Common myeloid progenitor, CD34-positive (primary cell): ENCODE measurements at regions of chr1 and their contacts with region 1.

Region 1: GRCh38 chr1:234533975-234534876 is 55.2 kb upstream of the TARBP1 start:
- DNase-seq: no peak
- H3K4me3 ChIP-seq: no peak overlapping the region
- H3K27ac ChIP-seq: no peak overlapping the region
- H3K4me1 ChIP-seq: peaks cover 5 to 18% (median 9%) of the 10 kb centered on the region in 4 experiments
- H3K27me3 ChIP-seq: no peaks in the 10 kb centered on the region

Region 2: GRCh38 chr1:233844692-233845091 is 689.5 kb before region 1 on chr1:
- CTCF ChIA-PET with region 1: no interaction called
- POLR2A ChIA-PET with region 1: no interaction called
- DNase-seq: no peak
- H3K4me3 ChIP-seq: no peak overlapping the region
- H3K27ac ChIP-seq: no peak overlapping the region
- H3K4me1 ChIP-seq: no peaks in the 10 kb centered on the region
- H3K27me3 ChIP-seq: peaks cover 0 to 2% (median 0%) of the 10 kb centered on the region in 5 experiments

Region 3: DNA sequence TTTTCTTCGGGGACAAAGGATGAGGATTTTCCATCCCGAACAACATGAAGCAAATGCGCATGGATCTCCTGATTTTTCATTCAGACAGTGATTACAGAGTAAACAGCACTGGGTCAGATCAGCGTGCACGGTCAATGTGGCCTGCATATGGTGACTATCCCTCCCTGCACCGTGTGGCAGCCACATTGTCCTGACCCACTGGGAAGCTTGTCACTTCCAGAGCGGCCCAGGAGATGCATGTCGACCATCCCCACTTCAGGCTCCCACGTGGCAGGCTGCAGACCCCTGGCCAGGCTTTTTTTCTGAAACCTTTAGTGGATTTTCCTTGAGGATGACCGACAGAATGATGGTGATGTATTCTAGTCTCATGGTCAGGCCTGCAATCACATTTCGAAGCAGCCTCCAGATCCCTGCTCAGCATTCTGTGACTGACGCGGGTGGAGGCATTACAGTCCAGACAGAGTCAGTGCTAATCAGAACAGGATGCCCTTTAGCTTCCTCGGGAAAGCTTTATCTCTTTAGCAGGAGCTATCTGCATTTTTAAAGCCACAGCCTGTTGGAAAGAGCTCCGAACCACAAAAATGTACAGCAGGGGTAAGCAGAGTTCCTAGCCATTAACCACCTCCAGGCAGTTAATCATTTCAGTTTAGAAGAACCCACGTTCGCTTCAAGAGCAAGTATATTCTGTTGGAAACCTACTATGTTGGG is 19.1 kb after region 1 on chr1:
- CTCF ChIA-PET with region 1: interaction called, 11 read pairs
- POLR2A ChIA-PET with region 1: no interaction called
- DNase-seq: peak; percentile 38 to 75 (median 55)
- H3K4me3 ChIP-seq: no peak overlapping the region
- H3K27ac ChIP-seq: no peak overlapping the region
- H3K4me1 ChIP-seq: peaks cover 3 to 26% (median 17%) of the 10 kb centered on the region in 4 experiments
- H3K27me3 ChIP-seq: no peaks in the 10 kb centered on the region

Region 4: GRCh38 chr1:234836045-234836681 is 301.9 kb after region 1 on chr1:
- CTCF ChIA-PET with region 1: no interaction called
- POLR2A ChIA-PET with region 1: no interaction called
- DNase-seq: no peak
- H3K4me3 ChIP-seq: no peak overlapping the region
- H3K27ac ChIP-seq: no peak overlapping the region
- H3K4me1 ChIP-seq: peaks cover 8 to 38% (median 13%) of the 10 kb centered on the region in 4 experiments
- H3K27me3 ChIP-seq: no peaks in the 10 kb centered on the region